Naive thymus-derived CD4-positive, alpha-beta T cell (primary cell): ENCODE measurements at regions of chr5 and their contacts with region 1.

Region 1: GRCh38 chr5:135535820-135536801 is at the start of gene NEUROG1:
- DNase-seq: no peak
- ATAC-seq: no peak
- H3K4me3 ChIP-seq: no peak within 1 kb of the TSS
- H3K4me3 Mint-ChIP-seq: peak within 1 kb of the TSS in 5 of 10 donors; percentile 42 to 74 (median 59)
- H3K27ac ChIP-seq: no peak within 1 kb of the TSS
- H3K27ac Mint-ChIP-seq: peak within 1 kb of the TSS in 1 of 9 donors; percentile 52
- H3K4me1 ChIP-seq: no peaks in the 10 kb centered on the region
- H3K4me1 Mint-ChIP-seq: peaks cover 2 to 14% (median 8%) of the 10 kb centered on the region in 7 donors
- H3K27me3 ChIP-seq: peaks cover 0 to 7% of the 10 kb centered on the region in 2 donors
- H3K27me3 Mint-ChIP-seq: peaks cover 81 to 91% (median 85%) of the 10 kb centered on the region in 5 donors
- total RNA-seq, gene NEUROG1: not detected

Region 2: DNA sequence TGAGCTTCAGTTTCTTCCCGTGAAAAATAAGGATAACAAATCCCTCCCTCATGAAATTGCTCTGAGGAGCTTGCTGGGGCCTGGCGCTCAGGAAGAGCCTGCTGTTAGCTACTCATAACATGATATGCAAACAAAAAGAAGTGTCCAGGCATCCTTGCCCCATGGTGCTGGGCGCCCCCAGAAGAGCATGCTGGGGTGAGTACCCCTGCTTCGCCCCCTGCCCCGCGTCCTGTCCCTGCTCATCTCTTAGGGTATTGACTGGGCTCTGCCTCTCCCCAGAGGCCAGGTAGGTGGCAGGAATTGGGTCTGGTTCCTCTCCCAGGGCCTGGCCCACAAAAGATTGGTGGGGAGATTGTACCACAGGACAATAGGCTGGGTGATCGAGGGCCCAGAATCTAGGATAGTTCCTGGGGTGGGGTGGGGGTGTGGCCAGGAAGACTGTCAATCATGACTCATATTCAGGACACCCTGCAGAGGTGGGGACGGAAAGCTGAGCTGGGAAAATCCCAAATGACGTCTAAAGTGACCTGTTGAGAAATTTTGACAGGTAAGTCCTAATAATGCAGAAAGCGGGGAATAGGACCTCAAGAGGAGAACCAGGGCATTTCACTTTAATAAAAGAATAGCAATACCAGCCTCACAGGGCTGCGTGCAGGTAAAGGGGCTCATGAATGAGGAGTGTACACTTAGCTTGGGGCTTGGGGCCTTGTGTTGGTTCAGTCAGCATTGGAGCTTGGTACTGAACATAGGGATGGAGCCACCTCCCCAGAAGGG is 511.0 kb before region 1 on chr5:
- CTCF ChIA-PET with region 1: no interaction called
- POLR2A ChIA-PET with region 1: no interaction called
- intact Hi-C with region 1: loop called in 1 of 2 experiments (anchors 5 kb)
- DNase-seq: no peak
- ATAC-seq: no peak
- H3K4me3 ChIP-seq: no peak overlapping the region
- H3K4me3 Mint-ChIP-seq: no peak overlapping the region
- H3K27ac ChIP-seq: no peak overlapping the region
- H3K27ac Mint-ChIP-seq: no peak overlapping the region
- H3K4me1 ChIP-seq: no peaks in the 10 kb centered on the region
- H3K4me1 Mint-ChIP-seq: peaks cover 8 to 19% (median 10%) of the 10 kb centered on the region in 7 donors
- H3K27me3 ChIP-seq: peaks cover 0 to 15% of the 10 kb centered on the region in 2 donors
- H3K27me3 Mint-ChIP-seq: peaks cover 35 to 60% (median 39%) of the 10 kb centered on the region in 5 donors